Activated naive CD4-positive, alpha-beta T cell treated with anti-CD3 and anti-CD28 coated beads, Interleukin-2, amount 10 ng/mL, durations not matched to agents 7 days and 5 days (primary cell): ENCODE measurements at regions of chr17 and their contacts with region 1.

Region 1: GRCh38 chr17:39197380-39198185 is at the start of gene CACNB1:
- DNase-seq: peak; percentile 85
- H3K4me3 Mint-ChIP-seq: peak within 1 kb of the TSS; percentile 94
- H3K27ac Mint-ChIP-seq: peak within 1 kb of the TSS; percentile 97
- H3K4me1 Mint-ChIP-seq: peaks cover 68% of the 10 kb centered on the region
- H3K27me3 Mint-ChIP-seq: no peaks in the 10 kb centered on the region

Region 2: DNA sequence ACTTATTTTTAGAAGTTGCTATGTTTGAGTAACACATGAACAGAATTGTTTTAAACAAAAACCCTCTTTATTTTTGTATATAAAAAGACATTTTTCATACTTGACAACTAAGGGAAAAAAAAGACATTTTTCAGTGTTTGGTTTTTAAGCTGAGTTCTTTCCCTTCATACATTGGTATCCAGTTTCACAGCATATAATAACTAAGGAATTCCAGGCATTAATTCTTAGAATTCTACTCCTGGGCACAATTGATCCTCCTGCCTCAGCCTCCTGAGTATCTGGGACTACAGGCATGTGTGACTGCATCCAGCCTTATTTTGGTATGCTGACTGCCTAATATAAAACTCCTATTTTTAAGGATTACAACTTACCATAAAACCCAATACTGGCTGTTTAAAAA is 238.8 kb before region 1 on chr17:
- CTCF ChIA-PET with region 1: no interaction called
- DNase-seq: no peak
- H3K4me3 Mint-ChIP-seq: no peak overlapping the region
- H3K27ac Mint-ChIP-seq: no peak overlapping the region
- H3K4me1 Mint-ChIP-seq: peaks cover 28% of the 10 kb centered on the region
- H3K27me3 Mint-ChIP-seq: no peaks in the 10 kb centered on the region

Region 3: GRCh38 chr17:39174907-39175694 is 22.5 kb before region 1 on chr17:
- CTCF ChIA-PET with region 1: interaction called, 21 read pairs
- DNase-seq: peak; percentile 86
- H3K4me3 Mint-ChIP-seq: no peak overlapping the region
- H3K27ac Mint-ChIP-seq: peak overlapping the region; percentile 37
- H3K4me1 Mint-ChIP-seq: peaks cover 26% of the 10 kb centered on the region
- H3K27me3 Mint-ChIP-seq: peaks cover 19% of the 10 kb centered on the region

Region 4: GRCh38 chr17:39252788-39253460 is 55.3 kb after region 1 on chr17:
- CTCF ChIA-PET with region 1: no interaction called
- DNase-seq: no peak
- H3K4me3 Mint-ChIP-seq: no peak overlapping the region
- H3K27ac Mint-ChIP-seq: no peak overlapping the region
- H3K4me1 Mint-ChIP-seq: no peaks in the 10 kb centered on the region
- H3K27me3 Mint-ChIP-seq: no peaks in the 10 kb centered on the region

Region 5: DNA sequence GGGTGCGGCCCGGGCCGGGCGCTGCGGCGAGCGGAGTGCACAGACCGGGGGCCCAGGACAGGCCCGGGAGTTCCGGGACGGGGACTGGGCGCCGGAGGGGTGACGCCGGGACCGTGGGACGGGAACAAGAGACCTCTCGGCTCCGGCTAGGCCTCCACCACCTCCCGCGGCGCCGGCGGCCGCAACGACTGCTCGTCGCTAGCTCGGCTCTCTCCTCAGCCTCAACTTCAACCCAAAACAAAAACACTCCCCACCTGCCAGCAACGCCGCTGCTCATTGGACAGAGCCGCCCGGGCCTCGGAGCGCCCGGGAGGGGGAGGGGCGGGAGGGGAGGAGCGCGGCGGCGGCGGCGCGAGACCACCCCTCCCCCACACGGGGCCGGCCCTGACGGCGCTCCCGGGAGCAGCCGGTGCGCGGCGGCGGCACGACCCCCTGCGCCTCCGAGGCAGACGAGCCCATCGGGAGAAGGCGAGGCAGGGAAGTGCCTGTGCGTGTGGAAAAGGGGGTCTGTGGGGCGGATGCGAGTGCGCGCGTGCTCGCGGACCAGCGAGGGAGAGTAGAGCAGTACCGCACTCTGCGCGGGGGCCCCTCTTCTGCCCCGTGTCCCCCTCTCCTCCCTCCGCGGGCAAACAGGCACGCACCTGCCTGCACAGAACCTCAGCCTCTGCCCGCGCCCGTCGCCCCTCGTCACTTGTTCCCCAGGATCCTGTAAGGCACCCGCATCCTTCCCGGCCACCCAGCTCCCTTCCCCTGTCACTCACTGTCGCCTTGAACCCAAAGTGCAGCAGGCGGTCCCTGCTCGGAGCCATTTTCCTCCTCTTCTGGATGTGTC is 204.0 kb after region 1 on chr17 and contains the start of gene FBXL20:
- CTCF ChIA-PET with region 1: no interaction called
- DNase-seq: peak; percentile 97
- H3K4me3 Mint-ChIP-seq: peak within 1 kb of the TSS; percentile 88
- H3K27ac Mint-ChIP-seq: peak within 1 kb of the TSS; percentile 94
- H3K4me1 Mint-ChIP-seq: peaks cover 36% of the 10 kb centered on the region
- H3K27me3 Mint-ChIP-seq: peaks cover 8% of the 10 kb centered on the region